CD8-positive, alpha-beta T cell (primary cell): ENCODE measurements at regions of chr6 and their contacts with region 1.

Region 1: GRCh38 chr6:79078075-79079025 is at the start of gene PHIP:
- DNase-seq: peak; percentile 84 to 97 (median 91)
- ATAC-seq: peak; percentile 81
- H3K4me3 ChIP-seq: peak within 1 kb of the TSS; percentile 77 to 89
- H3K4me3 Mint-ChIP-seq: peak within 1 kb of the TSS; percentile 89
- H3K27ac ChIP-seq: peak within 1 kb of the TSS; percentile 90 to 95
- H3K27ac Mint-ChIP-seq: peak within 1 kb of the TSS; percentile 92
- H3K4me1 ChIP-seq: peaks cover 21% of the 10 kb centered on the region
- H3K4me1 Mint-ChIP-seq: peaks cover 41% of the 10 kb centered on the region
- H3K27me3 ChIP-seq: no peaks in the 10 kb centered on the region
- H3K27me3 Mint-ChIP-seq: peaks cover 12% of the 10 kb centered on the region
- CTCF ChIP-seq: no peak
- total RNA-seq, gene PHIP: 32.3 to 32.6 TPM

Region 2: GRCh38 chr6:78867370-78868040 is 210.8 kb before region 1 on chr6 and contains the start of gene IRAK1BP1:
- CTCF ChIA-PET with region 1: no interaction called
- POLR2A ChIA-PET with region 1: interaction called, 4 read pairs
- intact Hi-C with region 1: loop called (anchors 1 to 5 kb)
- DNase-seq: peak; percentile 58 to 86 (median 77)
- ATAC-seq: peak; percentile 91
- H3K4me3 ChIP-seq: peak within 1 kb of the TSS; percentile 83 to 88
- H3K4me3 Mint-ChIP-seq: peak within 1 kb of the TSS; percentile 96
- H3K27ac ChIP-seq: peak within 1 kb of the TSS; percentile 76 to 88
- H3K27ac Mint-ChIP-seq: peak within 1 kb of the TSS; percentile 95
- H3K4me1 ChIP-seq: peaks cover 10% of the 10 kb centered on the region
- H3K4me1 Mint-ChIP-seq: peaks cover 27% of the 10 kb centered on the region
- H3K27me3 ChIP-seq: no peaks in the 10 kb centered on the region
- H3K27me3 Mint-ChIP-seq: no peaks in the 10 kb centered on the region
- CTCF ChIP-seq: no peak
- total RNA-seq, gene IRAK1BP1: 1.0 to 1.3 TPM

Region 3: DNA sequence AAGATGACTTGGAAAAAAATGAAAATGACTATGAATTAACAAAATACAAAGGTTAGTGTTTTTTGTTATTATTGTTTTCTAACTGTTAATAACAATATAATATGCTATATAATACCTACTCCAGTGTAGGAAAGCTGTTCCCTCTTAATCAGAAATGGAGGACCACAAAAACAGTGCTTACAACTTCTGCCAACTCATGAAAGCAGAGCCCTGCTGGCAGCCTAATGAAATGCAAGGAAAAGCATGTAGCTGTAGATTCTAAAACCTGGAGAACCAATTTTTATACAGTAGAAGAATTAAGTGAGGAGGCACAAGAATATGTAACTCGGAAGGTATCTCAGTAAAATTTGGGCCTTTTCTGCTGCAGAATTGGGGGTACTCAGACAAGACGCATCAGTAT is 29.7 kb before region 1 on chr6:
- CTCF ChIA-PET with region 1: no interaction called
- POLR2A ChIA-PET with region 1: interaction called, 18 read pairs
- intact Hi-C with region 1: loop called in 1 of 2 experiments (anchors 5 kb)
- DNase-seq: peak in 3 of 9 experiments; percentile 8 to 31 (median 22)
- ATAC-seq: no peak
- H3K4me3 ChIP-seq: no peak overlapping the region
- H3K4me3 Mint-ChIP-seq: no peak overlapping the region
- H3K27ac ChIP-seq: no peak overlapping the region
- H3K27ac Mint-ChIP-seq: no peak overlapping the region
- H3K4me1 ChIP-seq: no peaks in the 10 kb centered on the region
- H3K4me1 Mint-ChIP-seq: peaks cover 41% of the 10 kb centered on the region
- H3K27me3 ChIP-seq: no peaks in the 10 kb centered on the region
- H3K27me3 Mint-ChIP-seq: no peaks in the 10 kb centered on the region
- CTCF ChIP-seq: peak; percentile 24

Region 4: DNA sequence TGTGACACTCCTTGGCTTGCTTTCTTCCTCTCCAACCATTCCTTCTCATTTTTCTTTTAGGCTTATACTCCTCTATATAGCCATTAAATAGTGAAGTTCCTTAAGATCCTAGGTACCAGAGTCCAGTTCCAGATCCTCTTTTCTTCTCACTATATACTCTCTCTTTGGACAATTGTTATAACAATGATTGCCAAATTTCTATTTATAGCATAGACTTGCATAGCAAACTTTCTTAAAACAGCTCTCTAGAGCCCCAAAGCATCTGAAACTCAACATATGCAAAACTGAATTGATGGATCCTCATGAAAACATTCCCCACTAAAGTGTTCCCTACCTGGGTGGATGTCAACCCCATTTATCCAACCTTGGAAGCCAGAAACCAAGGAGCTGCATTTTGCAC is 13.7 kb before region 1 on chr6:
- CTCF ChIA-PET with region 1: interaction called, 4 read pairs
- POLR2A ChIA-PET with region 1: interaction called, 16 read pairs
- intact Hi-C with region 1: loop called in 1 of 2 experiments (anchors 2 kb)
- DNase-seq: no peak
- ATAC-seq: no peak
- H3K4me3 ChIP-seq: no peak overlapping the region
- H3K4me3 Mint-ChIP-seq: no peak overlapping the region
- H3K27ac ChIP-seq: no peak overlapping the region
- H3K27ac Mint-ChIP-seq: no peak overlapping the region
- H3K4me1 ChIP-seq: peaks cover 3% of the 10 kb centered on the region
- H3K4me1 Mint-ChIP-seq: peaks cover 28% of the 10 kb centered on the region
- H3K27me3 ChIP-seq: no peaks in the 10 kb centered on the region
- H3K27me3 Mint-ChIP-seq: no peaks in the 10 kb centered on the region
- CTCF ChIP-seq: no peak

Region 5: GRCh38 chr6:79536954-79537747 is 458.8 kb after region 1 on chr6 and contains the start of gene LCA5:
- CTCF ChIA-PET with region 1: no interaction called
- POLR2A ChIA-PET with region 1: interaction called, 4 read pairs
- intact Hi-C with region 1: loop called (anchors 2 to 5 kb)
- DNase-seq: peak; percentile 54 to 92 (median 79)
- ATAC-seq: peak; percentile 96
- H3K4me3 ChIP-seq: peak within 1 kb of the TSS; percentile 65 to 69
- H3K4me3 Mint-ChIP-seq: no peak within 1 kb of the TSS
- H3K27ac ChIP-seq: peak within 1 kb of the TSS; percentile 14 to 32
- H3K27ac Mint-ChIP-seq: no peak within 1 kb of the TSS
- H3K4me1 ChIP-seq: peaks cover 5% of the 10 kb centered on the region
- H3K4me1 Mint-ChIP-seq: no peaks in the 10 kb centered on the region
- H3K27me3 ChIP-seq: no peaks in the 10 kb centered on the region
- H3K27me3 Mint-ChIP-seq: peaks cover 12% of the 10 kb centered on the region
- CTCF ChIP-seq: no peak
- total RNA-seq, gene LCA5: not detected

Region 6: DNA sequence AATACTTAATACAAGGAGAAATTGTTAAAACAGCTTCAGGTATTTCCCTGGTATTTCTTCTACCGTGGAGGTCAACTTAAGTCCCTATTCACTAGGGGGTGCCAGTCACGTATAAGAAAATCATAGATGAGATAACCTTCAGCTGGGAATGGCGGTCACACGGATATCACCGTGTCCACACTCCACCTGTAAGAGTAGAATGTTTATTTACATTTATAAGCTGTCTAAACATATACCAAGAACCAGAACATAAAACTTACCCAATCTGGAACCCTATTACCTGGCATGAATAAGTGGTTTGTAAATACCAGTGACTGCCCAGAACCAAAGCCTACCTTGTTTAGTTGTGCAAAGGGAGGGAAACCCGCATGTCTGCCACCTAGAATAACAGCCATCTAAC is 870.9 kb after region 1 on chr6:
- CTCF ChIA-PET with region 1: no interaction called
- POLR2A ChIA-PET with region 1: interaction called, 3 read pairs
- intact Hi-C with region 1: loop called in 1 of 2 experiments (anchors 5 kb)
- DNase-seq: peak in 7 of 9 experiments; percentile 25 to 88 (median 57)
- ATAC-seq: peak; percentile 24
- H3K4me3 ChIP-seq: no peak overlapping the region
- H3K4me3 Mint-ChIP-seq: peak overlapping the region; percentile 9
- H3K27ac ChIP-seq: no peak overlapping the region
- H3K27ac Mint-ChIP-seq: peak overlapping the region; percentile 5
- H3K4me1 ChIP-seq: peaks cover 16% of the 10 kb centered on the region
- H3K4me1 Mint-ChIP-seq: peaks cover 27% of the 10 kb centered on the region
- H3K27me3 ChIP-seq: no peaks in the 10 kb centered on the region
- H3K27me3 Mint-ChIP-seq: peaks cover 2% of the 10 kb centered on the region
- CTCF ChIP-seq: peak; percentile 80

Region 7: GRCh38 chr6:80106418-80107235 is 1028.3 kb after region 1 on chr6 and contains the start of gene BCKDHB:
- CTCF ChIA-PET with region 1: no interaction called
- POLR2A ChIA-PET with region 1: interaction called, 4 read pairs
- intact Hi-C with region 1: loop called in 1 of 2 experiments (anchors 1 kb)
- DNase-seq: peak; percentile 95 to 99 (median 97)
- ATAC-seq: peak; percentile 97
- H3K4me3 ChIP-seq: peak within 1 kb of the TSS; percentile 71 to 81
- H3K4me3 Mint-ChIP-seq: peak within 1 kb of the TSS; percentile 93
- H3K27ac ChIP-seq: peak within 1 kb of the TSS; percentile 39 to 67
- H3K27ac Mint-ChIP-seq: peak within 1 kb of the TSS; percentile 91
- H3K4me1 ChIP-seq: peaks cover 15% of the 10 kb centered on the region
- H3K4me1 Mint-ChIP-seq: peaks cover 25% of the 10 kb centered on the region
- H3K27me3 ChIP-seq: no peaks in the 10 kb centered on the region
- H3K27me3 Mint-ChIP-seq: no peaks in the 10 kb centered on the region
- CTCF ChIP-seq: no peak
- total RNA-seq, gene BCKDHB: 8.2 to 8.3 TPM